Posterior cingulate gyrus (tissue), 11 donors: ENCODE measurements at regions of chrX and their contacts with region 1.

Region 1: GRCh38 chrX:86133761-86134160 is 14.5 kb upstream of the DACH2 start:
- DNase-seq: no peak

Region 2: DNA sequence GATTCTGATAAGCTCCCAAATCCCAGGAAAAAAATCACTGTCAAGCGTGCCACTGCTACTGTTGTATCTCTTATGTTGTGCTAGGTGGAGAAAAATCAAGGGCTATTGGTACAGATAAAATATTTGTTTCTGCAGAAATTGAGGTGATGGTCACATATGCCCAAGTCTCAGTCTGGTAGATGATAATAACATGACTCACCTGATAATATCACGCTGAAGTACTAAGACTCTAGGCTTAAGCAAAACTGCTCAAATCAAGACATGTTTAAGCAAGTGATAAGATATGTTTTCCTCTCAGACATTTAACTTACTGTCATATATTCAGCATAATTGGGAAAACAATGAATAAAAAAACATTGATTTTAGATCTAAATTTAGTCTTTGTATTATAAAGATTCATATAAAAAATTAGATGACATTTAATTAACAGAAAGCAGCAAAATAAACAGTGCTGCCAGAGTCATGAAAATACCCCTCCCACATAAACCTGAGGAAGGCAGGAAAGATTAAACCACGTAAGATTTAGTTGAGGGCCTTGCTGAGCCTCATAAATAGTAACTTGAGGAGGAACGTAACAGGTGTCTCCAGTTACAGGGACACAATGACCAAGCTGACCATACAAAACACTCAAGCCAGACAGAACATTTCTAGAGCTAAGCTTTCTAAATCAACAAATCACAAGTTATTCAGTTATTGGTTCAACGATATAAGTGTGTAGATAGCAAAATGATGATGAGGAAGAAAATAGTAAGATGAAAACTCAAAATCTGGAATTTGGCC is 229.9 kb before region 1 on chrX:
- intact Hi-C with region 1: no loop called
- DNase-seq: no peak

Region 3: GRCh38 chrX:86039625-86040568 is 93.9 kb before region 1 on chrX:
- intact Hi-C with region 1: no loop called
- DNase-seq: peak in 1 of 10 donors; percentile 53

Region 4: DNA sequence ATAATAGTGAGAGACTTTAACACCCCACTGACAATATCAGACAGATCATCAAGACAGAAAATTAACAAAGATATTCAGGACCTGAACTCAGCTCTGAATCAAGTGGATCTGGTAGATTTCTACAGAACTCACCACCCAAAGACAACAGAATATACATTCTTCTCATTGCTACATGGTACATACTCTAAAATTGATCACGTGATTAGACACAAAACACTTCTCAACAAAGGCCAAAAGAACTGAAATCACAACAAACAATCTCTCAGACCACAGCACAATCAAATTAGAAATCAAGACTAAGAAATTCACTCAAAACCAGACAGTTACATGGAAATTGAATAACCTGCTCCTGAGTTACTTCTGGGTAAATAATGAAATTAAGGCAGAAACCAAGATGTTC is 64.0 kb after region 1 on chrX:
- intact Hi-C with region 1: no loop called
- DNase-seq: no peak

Region 5: GRCh38 chrX:86215260-86215659 is 81.5 kb after region 1 on chrX:
- intact Hi-C with region 1: no loop called
- DNase-seq: no peak

Region 6: GRCh38 chrX:86946569-86946968 is 812.8 kb after region 1 on chrX:
- intact Hi-C with region 1: loop called (anchors 5 kb)
- DNase-seq: peak in 2 of 10 donors; percentile 2 to 9